ENCODE measurements at regions of chr2 and their contacts with region 1.

Region 1: GRCh38 chr2:26720322-26721166 is 28.0 kb downstream of the KCNK3 start:
- DNase-seq: peak; percentile 47 to 92
- H3K4me3 ChIP-seq: no peak overlapping the region
- H3K27ac ChIP-seq: peak overlapping the region; percentile 64 to 70
- H3K4me1 ChIP-seq: peaks cover 27 to 41% of the 10 kb centered on the region in 2 donors
- H3K27me3 ChIP-seq: no peaks in the 10 kb centered on the region
- CTCF ChIP-seq: no peak

Region 2: DNA sequence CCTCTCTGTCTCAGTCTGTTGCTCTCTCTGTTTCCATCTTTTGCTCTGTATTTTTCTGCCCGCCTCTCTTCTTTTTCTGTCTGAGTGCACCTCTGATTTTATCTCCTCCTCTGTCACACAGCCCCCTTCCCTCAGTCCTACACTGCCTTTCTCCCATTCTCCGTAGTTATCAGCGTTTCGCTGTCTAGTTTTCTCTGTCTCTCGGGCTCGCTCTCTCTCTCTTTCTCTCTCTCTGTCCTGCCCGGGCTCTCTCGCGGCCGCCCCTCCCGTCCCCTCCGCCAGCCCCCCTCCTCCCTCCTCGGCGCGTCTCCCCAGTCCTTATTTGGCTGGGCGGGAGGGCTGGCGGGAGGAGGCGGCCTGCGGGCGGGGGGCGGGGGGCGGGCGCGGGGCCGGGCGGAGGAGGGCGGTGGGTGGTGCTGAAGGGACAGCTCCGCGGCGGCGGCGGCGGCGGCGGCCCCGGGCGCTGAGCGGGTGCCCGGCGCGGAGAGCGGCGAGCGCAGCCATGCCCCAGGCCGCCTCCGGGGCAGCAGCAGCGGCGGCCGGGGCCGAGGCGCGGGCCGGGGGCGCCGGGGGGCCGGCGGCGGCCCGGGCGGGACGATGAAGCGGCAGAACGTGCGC is 28.2 kb before region 1 on chr2 and contains the start of gene KCNK3:
- intact Hi-C with region 1: loop called (anchors 1 kb)
- DNase-seq: peak in 1 of 2 donors; percentile 84
- H3K4me3 ChIP-seq: peak within 1 kb of the TSS; percentile 66 to 80
- H3K27ac ChIP-seq: peak within 1 kb of the TSS; percentile 88 to 90
- H3K4me1 ChIP-seq: peaks cover 14 to 19% of the 10 kb centered on the region in 2 donors
- H3K27me3 ChIP-seq: no peaks in the 10 kb centered on the region
- CTCF ChIP-seq: no peak
- total RNA-seq, gene KCNK3: 7.2 TPM

Region 3: DNA sequence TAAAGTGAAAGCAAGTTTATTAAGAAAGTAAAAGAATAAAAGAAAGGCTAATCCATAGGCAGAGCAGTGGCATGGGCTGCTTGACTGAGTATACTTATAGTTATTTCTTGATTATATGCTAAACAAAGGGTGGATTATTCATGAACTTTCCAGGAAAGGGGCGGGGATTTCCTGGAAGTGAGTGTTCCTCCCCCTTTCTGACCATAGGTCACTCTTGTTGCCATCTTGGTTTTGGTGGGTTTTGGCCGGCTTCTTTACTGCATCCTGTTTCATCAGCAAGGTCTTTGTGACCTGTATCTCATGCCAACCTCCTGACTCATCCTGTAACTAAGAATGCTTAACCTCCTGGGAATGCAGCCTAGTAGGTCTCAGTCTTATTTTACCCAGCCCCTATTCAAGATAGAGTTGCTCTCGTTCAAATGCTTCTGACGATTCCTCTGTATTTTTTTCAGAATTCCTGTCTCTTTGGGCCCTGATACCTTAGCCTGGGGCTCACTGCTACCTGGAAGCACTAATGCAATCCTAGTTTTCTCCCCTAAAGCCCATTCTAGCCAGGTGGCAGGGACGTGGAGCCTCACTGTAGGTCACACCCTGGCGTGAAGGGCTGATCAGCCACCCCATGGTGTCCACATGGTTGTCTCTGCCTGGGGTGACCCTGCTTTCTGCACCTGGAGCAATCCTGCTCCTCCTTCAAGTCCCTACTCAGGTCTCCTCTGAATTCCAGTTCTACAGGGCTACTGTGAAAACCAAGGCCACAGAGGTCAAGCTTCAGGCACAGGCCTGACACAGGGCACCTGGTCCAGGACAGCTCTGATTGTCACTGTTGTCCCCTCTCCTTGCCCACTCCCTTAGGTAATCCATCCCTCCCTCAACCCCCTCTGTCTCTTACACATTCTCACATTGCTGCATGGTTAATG is 37.6 kb after region 1 on chr2:
- intact Hi-C with region 1: loop called (anchors 2 kb)
- DNase-seq: peak in 1 of 2 donors; percentile 90
- H3K4me3 ChIP-seq: no peak overlapping the region
- H3K27ac ChIP-seq: peak overlapping the region; percentile 51 to 69
- H3K4me1 ChIP-seq: peaks cover 3 to 13% of the 10 kb centered on the region in 2 donors
- H3K27me3 ChIP-seq: no peaks in the 10 kb centered on the region
- CTCF ChIP-seq: no peak